Aorta (tissue), 5 donors: ENCODE measurements at regions of chr1 and their contacts with region 1.

Region 1: DNA sequence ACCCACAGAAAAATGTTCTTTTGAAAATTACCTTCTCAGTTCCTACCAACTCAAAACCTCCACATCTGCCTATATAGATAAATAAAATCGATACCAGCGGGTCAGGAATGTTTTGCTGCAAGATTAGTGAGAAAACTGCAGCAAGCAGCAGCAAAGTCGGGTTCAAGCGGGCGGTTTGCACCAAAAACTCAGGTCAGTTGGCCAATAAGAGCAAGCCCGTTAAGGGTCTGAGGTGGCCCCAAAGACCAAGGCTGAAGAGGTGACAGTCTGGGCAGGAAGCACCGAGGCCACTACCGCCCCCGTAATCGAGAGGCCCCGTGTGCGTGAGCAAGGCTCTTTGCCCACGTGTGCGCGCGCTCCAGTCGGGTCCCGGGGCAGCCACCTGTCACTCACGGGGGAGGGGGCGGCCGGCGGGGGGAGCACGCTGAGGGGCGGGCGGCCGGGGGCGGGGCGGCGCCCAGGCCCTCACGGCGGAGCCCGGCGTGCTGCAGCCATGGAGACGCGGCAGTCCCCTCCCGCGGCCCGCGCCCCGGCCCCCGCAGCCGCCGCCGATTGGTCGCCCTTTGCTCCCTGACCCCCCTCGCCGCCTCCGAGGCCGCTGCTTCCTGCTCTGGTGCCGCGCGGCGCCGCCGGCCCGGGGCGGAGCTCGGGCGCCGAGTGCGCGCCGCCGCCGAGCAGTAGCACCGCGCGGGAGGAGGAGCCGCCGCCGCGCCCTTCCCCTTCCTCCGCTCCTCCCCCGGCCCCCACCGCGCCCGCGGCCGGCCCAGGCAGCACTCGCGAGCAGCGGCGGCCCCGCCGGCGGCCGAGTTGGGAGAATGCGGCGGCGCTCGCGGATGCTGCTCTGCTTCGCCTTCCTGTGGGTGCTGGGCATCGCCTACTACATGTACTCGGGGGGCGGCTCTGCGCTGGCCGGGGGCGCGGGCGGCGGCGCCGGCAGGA is at the start of gene GALNT2:
- DNase-seq: peak; percentile 93 to 96
- ATAC-seq: peak; percentile 94
- H3K4me3 ChIP-seq: peak within 1 kb of the TSS; percentile 77 to 96
- H3K27ac ChIP-seq: peak within 1 kb of the TSS; percentile 81 to 87
- H3K4me1 ChIP-seq: no peaks in the 10 kb centered on the region
- H3K27me3 ChIP-seq: no peaks in the 10 kb centered on the region
- total RNA-seq, gene GALNT2: 109 to 116 TPM

Region 2: GRCh38 chr1:229661022-229661877 is 405.5 kb before region 1 on chr1:
- intact Hi-C with region 1: loop called in 1 of 2 experiments (anchors 5 kb)
- DNase-seq: peak; percentile 86 to 93
- ATAC-seq: peak; percentile 90
- H3K4me3 ChIP-seq: no peak overlapping the region
- H3K27ac ChIP-seq: no peak overlapping the region
- H3K4me1 ChIP-seq: no peaks in the 10 kb centered on the region
- H3K27me3 ChIP-seq: no peaks in the 10 kb centered on the region

Region 3: GRCh38 chr1:229828461-229828860 is 238.3 kb before region 1 on chr1:
- intact Hi-C with region 1: loop called in 1 of 2 experiments (anchors 5 kb)
- DNase-seq: no peak
- ATAC-seq: peak; percentile 81
- H3K4me3 ChIP-seq: no peak overlapping the region
- H3K27ac ChIP-seq: peak overlapping the region; percentile 67 to 86
- H3K4me1 ChIP-seq: peaks cover 8 to 11% of the 10 kb centered on the region in 2 donors
- H3K27me3 ChIP-seq: no peaks in the 10 kb centered on the region

Region 4: DNA sequence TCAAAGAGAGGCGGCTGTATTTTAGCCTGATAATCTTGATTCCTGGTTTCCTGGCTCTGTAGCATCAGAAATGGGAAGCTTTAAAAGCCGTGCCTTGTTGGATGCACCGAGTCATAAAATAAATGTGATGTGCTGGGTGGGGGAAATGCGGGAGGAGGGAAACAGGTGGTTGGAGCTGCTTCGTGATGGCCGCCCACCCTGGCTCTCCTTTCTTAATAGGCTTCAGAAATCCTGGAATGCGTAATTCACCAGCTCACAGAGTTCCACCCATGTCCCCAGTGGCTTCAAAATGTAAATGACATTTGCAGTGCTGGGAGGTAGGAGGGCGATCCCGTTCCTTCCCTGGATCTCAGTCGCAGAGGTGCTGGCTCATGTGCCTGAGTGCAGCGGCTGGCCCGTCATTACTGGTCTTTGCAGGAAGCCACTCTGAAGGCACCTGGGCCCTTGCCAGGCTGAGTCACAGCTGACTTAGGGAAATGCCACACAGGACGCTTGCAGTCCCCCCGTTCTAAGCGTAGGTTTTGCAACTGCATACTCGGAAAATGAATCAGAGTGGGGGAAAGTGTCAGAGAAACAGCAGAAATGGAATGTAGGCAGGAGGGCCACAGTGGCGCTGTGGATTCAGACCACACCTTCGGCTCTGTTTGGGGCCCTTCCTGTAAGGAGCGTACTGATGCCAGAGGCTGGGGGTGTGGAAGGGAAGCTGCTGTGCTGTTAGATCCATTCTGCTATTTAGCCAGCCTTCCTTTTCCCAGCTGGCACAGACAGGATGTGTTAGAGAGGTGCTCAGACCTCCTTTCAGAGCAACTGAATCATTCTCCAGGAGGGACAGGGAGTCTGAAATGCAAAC is 37.9 kb after region 1 on chr1:
- intact Hi-C with region 1: loop called (anchors 5 kb)
- DNase-seq: peak; percentile 98 to 100
- ATAC-seq: peak; percentile 91
- H3K4me3 ChIP-seq: no peak overlapping the region
- H3K27ac ChIP-seq: peak overlapping the region; percentile 18 to 99
- H3K4me1 ChIP-seq: peaks cover 8 to 15% of the 10 kb centered on the region in 2 donors
- H3K27me3 ChIP-seq: no peaks in the 10 kb centered on the region